ENCODE measurements at regions of chr16 and their contacts with region 1.

Region 1: GRCh38 chr16:11386791-11387546 is 41.7 kb downstream of the RMI2 start:
- DNase-seq: no peak
- ATAC-seq: peak; percentile 50; the same call in 1 of the 2 replicates
- H3K4me3 ChIP-seq: no peak overlapping the region
- H3K27ac ChIP-seq: no peak overlapping the region
- H3K4me1 ChIP-seq: no peaks in the 10 kb centered on the region
- H3K27me3 ChIP-seq: no peaks in the 10 kb centered on the region
- CTCF ChIP-seq: no peak; the same call in 1 of the 2 replicates

Region 2: GRCh38 chr16:10964039-10964890 is 422.7 kb before region 1 on chr16:
- CTCF ChIA-PET with region 1: no interaction called
- POLR2A ChIA-PET with region 1: no interaction called
- in situ Hi-C with region 1: no loop called
- intact Hi-C with region 1: loop called (anchors 10 kb)
- DNase-seq: no peak
- ATAC-seq: peak; percentile 95
- H3K4me3 ChIP-seq: peak overlapping the region in 1 of 2 experiments; percentile 5; a peak in 1 of 4 replicates
- H3K27ac ChIP-seq: no peak overlapping the region
- H3K4me1 ChIP-seq: no peaks in the 10 kb centered on the region
- H3K27me3 ChIP-seq: no peaks in the 10 kb centered on the region
- CTCF ChIP-seq: peak; percentile 97

Region 3: DNA sequence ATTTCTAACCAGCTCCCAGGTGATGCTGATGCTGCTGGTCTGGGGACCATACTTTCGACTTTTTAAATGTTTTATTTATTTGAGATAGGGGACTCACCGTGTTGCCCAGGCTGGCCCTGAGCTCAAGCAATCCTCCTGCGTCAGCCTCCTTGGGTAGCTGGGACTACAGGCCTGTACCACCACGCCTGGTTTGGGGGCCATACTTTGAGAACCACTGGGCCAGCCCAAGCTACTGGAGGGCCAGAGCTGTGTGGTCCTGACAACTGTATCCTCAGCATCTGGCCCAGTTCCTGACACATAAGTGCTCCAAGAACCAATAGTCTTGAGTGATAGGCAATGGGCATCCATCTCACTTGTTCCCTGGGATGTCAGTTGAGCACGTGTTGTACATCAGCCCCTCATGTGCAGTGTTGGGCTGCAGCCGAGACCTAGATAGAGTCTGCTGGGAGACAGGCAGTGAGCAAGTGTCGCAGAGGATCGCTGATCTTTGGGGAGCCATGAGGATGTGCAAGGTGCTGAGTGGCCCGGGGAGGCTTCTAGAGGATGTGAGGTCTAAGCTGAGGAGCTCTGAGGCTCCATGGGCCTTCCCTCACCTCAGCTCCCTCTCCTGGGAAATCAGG is 40.2 kb before region 1 on chr16:
- CTCF ChIA-PET with region 1: no interaction called
- POLR2A ChIA-PET with region 1: interaction called, 17 read pairs
- in situ Hi-C with region 1: no loop called
- intact Hi-C with region 1: no loop called
- DNase-seq: no peak
- ATAC-seq: no peak
- H3K4me3 ChIP-seq: no peak overlapping the region
- H3K27ac ChIP-seq: no peak overlapping the region
- H3K4me1 ChIP-seq: peaks cover 6% of the 10 kb centered on the region
- H3K27me3 ChIP-seq: no peaks in the 10 kb centered on the region
- CTCF ChIP-seq: no peak

Region 4: DNA sequence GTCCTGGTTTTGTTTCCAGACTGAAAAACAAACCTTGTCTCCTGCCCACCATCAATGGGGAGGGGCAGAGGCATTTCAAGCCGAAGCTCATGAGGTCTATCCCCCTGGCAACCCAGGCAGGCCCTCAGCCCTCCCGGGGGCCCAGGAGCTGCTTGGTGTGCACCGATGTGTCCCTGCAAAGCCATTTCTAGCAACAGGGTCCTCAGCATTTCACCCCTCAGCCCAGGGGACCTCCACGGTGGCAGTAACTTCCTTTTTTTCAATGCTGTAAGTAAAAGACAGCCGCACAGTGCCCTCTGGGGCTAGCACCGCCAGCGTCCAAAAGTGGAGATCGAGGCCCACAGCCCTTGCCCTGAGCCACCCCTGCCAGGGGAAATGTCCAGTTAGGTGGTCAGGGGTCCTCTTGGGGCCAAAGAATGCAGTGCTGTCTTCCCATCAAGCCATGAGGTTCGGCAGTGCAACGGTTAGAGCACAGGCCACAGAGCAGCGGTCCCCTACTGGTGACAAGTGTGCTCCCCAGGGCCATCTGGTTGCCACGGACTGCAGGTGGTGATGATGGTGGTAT is 119.9 kb after region 1 on chr16:
- CTCF ChIA-PET with region 1: no interaction called
- POLR2A ChIA-PET with region 1: no interaction called
- in situ Hi-C with region 1: no loop called
- intact Hi-C with region 1: no loop called
- DNase-seq: no peak
- ATAC-seq: no peak
- H3K4me3 ChIP-seq: no peak overlapping the region
- H3K27ac ChIP-seq: no peak overlapping the region
- H3K4me1 ChIP-seq: no peaks in the 10 kb centered on the region
- H3K27me3 ChIP-seq: no peaks in the 10 kb centered on the region
- CTCF ChIP-seq: no peak

Region 5: GRCh38 chr16:11726008-11726407 is 339.0 kb after region 1 on chr16:
- CTCF ChIA-PET with region 1: no interaction called
- POLR2A ChIA-PET with region 1: interaction called, 18 read pairs
- in situ Hi-C with region 1: no loop called
- intact Hi-C with region 1: no loop called
- DNase-seq: no peak
- ATAC-seq: no peak
- H3K4me3 ChIP-seq: no peak overlapping the region
- H3K27ac ChIP-seq: no peak overlapping the region
- H3K4me1 ChIP-seq: no peaks in the 10 kb centered on the region
- H3K27me3 ChIP-seq: no peaks in the 10 kb centered on the region
- CTCF ChIP-seq: no peak

Region 6: DNA sequence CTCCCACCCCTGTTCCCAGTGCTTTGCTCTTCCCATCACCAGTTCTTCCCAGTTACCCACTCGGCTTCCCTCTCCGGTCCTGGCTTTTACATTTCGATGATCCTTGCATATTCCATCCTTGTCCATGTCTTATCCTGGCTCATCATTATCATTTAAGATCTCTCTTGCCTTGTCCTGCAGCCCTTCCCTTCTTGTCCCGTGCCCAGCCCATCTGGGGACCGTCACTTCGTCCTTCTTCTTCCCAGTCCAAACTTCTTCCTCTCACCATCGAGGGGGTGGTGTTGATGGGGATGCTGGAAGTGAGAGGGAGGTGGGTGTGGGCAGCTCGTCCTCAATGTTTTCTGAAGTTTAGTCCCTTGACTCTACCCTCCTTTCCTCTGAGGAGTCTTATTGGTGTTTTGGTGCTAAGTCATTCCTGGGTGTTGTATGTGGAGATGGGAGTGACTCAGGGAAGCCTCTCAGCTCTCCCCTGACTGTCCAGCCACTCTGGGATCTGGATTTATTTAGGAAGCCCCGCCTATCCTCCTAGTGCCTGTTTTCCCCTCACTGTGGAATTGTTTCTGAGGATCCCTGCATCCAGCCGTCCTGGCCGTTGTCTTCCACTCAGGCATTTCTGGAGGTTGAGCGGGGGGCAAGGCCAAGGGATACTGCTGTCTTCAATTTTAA is 590.5 kb after region 1 on chr16:
- CTCF ChIA-PET with region 1: no interaction called
- POLR2A ChIA-PET with region 1: no interaction called
- in situ Hi-C with region 1: no loop called
- intact Hi-C with region 1: no loop called
- DNase-seq: no peak
- ATAC-seq: peak; percentile 50
- H3K4me3 ChIP-seq: peak overlapping the region; percentile 73 to 86
- H3K27ac ChIP-seq: peak overlapping the region; percentile 78
- H3K4me1 ChIP-seq: peaks cover 6% of the 10 kb centered on the region; the same call in 1 of the 2 replicates
- H3K27me3 ChIP-seq: no peaks in the 10 kb centered on the region
- CTCF ChIP-seq: no peak